ENCODE measurements at regions of chr10 and their contacts with region 1.

Region 1: GRCh38 chr10:63166742-63167258 is 33.7 kb downstream of the NRBF2 start:
- DNase-seq: no peak
- H3K4me3 ChIP-seq: no peak overlapping the region
- H3K27ac ChIP-seq: no peak overlapping the region
- H3K4me1 ChIP-seq: no peaks in the 10 kb centered on the region
- H3K27me3 ChIP-seq: no peaks in the 10 kb centered on the region
- CTCF ChIP-seq: peak; percentile 61 to 90 (median 88)

Region 2: GRCh38 chr10:62831346-62831745 is 335.5 kb before region 1 on chr10:
- intact Hi-C with region 1: no loop called
- DNase-seq: no peak
- H3K4me3 ChIP-seq: no peak overlapping the region
- H3K27ac ChIP-seq: no peak overlapping the region
- H3K4me1 ChIP-seq: no peaks in the 10 kb centered on the region
- H3K27me3 ChIP-seq: no peaks in the 10 kb centered on the region
- CTCF ChIP-seq: no peak

Region 3: GRCh38 chr10:63133056-63133820 is 33.6 kb before region 1 on chr10 and contains the start of gene NRBF2:
- intact Hi-C with region 1: no loop called
- DNase-seq: peak; percentile 95 to 99
- H3K4me3 ChIP-seq: peak within 1 kb of the TSS; percentile 97 to 99
- H3K27ac ChIP-seq: peak within 1 kb of the TSS; percentile 95 to 97
- H3K4me1 ChIP-seq: peaks cover 4 to 10% of the 10 kb centered on the region in 2 donors
- H3K27me3 ChIP-seq: no peaks in the 10 kb centered on the region
- CTCF ChIP-seq: peak in 1 of 3 experiments; percentile 21
- total RNA-seq, gene NRBF2: 4.2 TPM

Region 4: DNA sequence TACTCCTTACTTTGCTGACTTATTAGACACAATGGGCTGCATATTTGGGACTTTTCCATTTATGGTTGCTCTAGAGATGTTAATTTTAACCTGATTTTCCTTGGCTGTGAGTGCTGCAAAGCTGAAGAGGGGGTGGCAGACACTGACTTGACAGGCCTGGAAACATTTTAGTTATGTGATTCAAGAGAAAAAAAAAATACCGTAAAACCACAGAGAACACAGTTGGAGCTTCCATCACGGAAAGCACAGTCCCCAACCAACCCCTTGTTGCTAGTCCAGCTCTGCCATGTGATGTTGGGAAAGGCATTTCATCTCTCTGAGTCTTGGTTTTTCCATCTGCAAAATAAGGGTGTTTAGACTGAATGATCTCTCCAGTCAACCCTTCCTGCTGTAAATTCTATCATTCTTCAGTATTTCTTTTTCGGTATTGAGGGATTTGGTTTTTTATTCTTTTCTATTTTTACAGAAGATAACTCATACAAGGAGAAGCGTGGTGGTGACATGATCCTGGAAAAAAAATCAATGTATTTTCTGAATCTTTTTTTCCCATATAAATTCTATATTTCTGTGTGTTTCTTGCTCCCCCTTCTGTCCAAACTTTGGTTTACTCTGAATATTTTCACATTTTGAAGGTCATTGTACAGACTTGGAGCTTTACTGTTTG is 600.5 kb after region 1 on chr10:
- intact Hi-C with region 1: loop called (anchors 5 kb)
- DNase-seq: no peak
- H3K4me3 ChIP-seq: no peak overlapping the region
- H3K27ac ChIP-seq: peak overlapping the region; percentile 15 to 54
- H3K4me1 ChIP-seq: peaks cover 5 to 14% of the 10 kb centered on the region in 2 donors
- H3K27me3 ChIP-seq: no peaks in the 10 kb centered on the region
- CTCF ChIP-seq: peak; percentile 37 to 46 (median 45)

Region 5: GRCh38 chr10:63819753-63820329 is 653.0 kb after region 1 on chr10:
- intact Hi-C with region 1: loop called (anchors 1 kb)
- DNase-seq: peak in 1 of 2 donors; percentile 81
- H3K4me3 ChIP-seq: no peak overlapping the region
- H3K27ac ChIP-seq: no peak overlapping the region
- H3K4me1 ChIP-seq: no peaks in the 10 kb centered on the region
- H3K27me3 ChIP-seq: no peaks in the 10 kb centered on the region
- CTCF ChIP-seq: peak; percentile 46 to 79 (median 74)

Measured in ascending aorta (tissue), 2 donors.